Activated CD4-positive, alpha-beta memory T cell treated with anti-CD3 and anti-CD28 coated beads, Interleukin-2, amount 10 ng/mL, durations not matched to agents 7 days and 5 days (primary cell): ENCODE measurements at regions of chr16 and their contacts with region 1.

Region 1: GRCh38 chr16:2194852-2195321 is 1.5 kb downstream of the CASKIN1 start:
- DNase-seq: peak; percentile 55
- H3K4me3 Mint-ChIP-seq: no peak overlapping the region
- H3K27ac Mint-ChIP-seq: no peak overlapping the region
- H3K4me1 Mint-ChIP-seq: peaks cover 3% of the 10 kb centered on the region
- H3K27me3 Mint-ChIP-seq: peaks cover 43% of the 10 kb centered on the region

Region 2: GRCh38 chr16:2147981-2148671 is 46.8 kb before region 1 on chr16 and contains the start of gene RAB26:
- CTCF ChIA-PET with region 1: no interaction called
- POLR2A ChIA-PET with region 1: no interaction called
- DNase-seq: peak; percentile 60
- H3K4me3 Mint-ChIP-seq: no peak within 1 kb of the TSS
- H3K27ac Mint-ChIP-seq: no peak within 1 kb of the TSS
- H3K4me1 Mint-ChIP-seq: peaks cover 28% of the 10 kb centered on the region
- H3K27me3 Mint-ChIP-seq: no peaks in the 10 kb centered on the region
- total RNA-seq, gene RAB26: 0.83 to 1.1 TPM

Region 3: DNA sequence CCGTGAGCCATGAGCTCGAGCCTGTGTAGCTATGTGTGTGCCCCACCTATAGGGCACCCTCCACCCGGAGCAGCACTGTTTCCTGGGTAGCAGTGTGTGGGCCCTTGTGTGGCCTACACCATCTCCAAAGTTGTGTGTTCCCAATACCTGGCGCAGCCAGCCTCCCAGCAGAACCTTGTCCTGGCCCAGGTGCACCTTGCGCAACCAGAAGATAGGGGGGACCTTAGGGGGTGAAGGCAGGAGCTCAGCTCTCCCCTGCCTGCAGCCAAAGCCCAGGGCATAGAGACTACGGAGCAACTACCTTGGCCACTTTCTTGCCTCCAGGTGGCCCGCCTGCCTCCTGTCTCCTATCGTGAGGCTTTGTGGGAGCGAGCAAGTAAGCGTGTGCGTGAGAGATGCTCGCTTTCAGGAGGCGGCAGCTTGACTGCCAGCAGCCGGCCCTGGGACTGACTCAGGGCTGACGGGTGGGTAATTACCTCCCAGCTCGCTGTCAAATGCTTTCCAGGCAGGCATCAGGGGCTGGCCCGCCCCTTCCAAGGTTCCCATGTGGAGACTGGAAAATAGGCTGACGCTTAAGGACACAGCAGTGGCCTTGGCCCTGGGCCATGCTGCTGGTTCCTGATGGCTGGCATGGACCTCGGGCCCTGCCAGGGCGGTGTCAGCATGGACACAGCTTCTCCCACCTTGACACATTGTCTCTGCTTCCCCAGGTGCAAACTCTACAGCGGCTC is 20.3 kb before region 1 on chr16:
- CTCF ChIA-PET with region 1: no interaction called
- POLR2A ChIA-PET with region 1: no interaction called
- DNase-seq: no peak
- H3K4me3 Mint-ChIP-seq: no peak overlapping the region
- H3K27ac Mint-ChIP-seq: no peak overlapping the region
- H3K4me1 Mint-ChIP-seq: no peaks in the 10 kb centered on the region
- H3K27me3 Mint-ChIP-seq: no peaks in the 10 kb centered on the region

Region 4: DNA sequence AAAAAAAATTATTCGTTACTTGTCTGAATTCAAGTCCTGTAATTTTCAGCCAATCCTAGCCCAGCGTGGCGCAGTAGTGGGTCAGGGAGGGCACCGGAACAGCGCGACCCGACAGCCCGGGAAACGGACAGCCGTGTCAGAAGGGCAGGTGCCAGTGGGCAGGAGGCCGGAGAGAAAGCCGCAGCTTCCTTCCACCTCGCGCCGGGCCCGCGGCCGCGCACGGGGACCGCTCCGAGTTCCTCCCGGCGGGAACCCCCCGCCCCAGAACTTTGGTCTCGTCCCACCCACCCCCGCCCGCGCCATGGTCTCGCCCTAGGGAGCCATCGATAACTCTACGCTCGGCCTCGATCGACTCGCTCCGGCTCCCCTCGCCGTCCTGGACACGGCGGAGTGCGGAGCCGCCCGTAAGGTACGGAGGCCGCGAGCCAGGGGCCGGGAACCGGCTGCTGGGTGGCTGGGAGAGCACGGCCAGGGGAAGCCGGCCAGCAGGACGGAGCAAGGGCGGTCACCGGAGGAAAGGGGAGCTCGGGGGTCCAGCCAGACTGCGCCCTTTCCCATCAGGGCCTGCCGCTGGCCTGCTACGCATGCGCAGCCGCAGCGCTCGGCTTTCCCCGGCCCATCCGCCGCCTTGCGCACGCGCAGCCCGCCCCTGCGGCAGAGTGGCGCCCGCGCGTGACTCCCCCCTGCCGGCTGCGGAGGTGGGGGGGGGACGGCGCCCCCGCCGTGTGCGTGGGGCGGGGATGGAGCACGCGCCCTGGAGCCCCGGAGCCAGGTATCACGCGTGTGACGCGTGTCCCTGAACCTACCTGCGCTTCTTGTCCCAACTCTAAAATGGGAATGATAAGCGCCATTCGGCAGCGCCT is 10.4 kb after region 1 on chr16 and contains the start of gene MLST8:
- CTCF ChIA-PET with region 1: interaction called, 4 read pairs
- POLR2A ChIA-PET with region 1: interaction called, 18 read pairs
- DNase-seq: peak; percentile 91
- H3K4me3 Mint-ChIP-seq: peak within 1 kb of the TSS; percentile 73
- H3K27ac Mint-ChIP-seq: peak within 1 kb of the TSS; percentile 73
- H3K4me1 Mint-ChIP-seq: peaks cover 30% of the 10 kb centered on the region
- H3K27me3 Mint-ChIP-seq: peaks cover 9% of the 10 kb centered on the region
- total RNA-seq, gene MLST8: 32.6 to 33.7 TPM